ENCODE measurements at regions of chr4 and their contacts with region 1.

Region 1: GRCh38 chr4:186008057-186008456 is 60.9 kb upstream of the TLR3 start:
- DNase-seq: no peak
- ATAC-seq: no peak
- H3K4me3 ChIP-seq: no peak overlapping the region
- H3K4me3 Mint-ChIP-seq: no peak overlapping the region
- H3K27ac ChIP-seq: no peak overlapping the region
- H3K27ac Mint-ChIP-seq: no peak overlapping the region
- H3K4me1 ChIP-seq: peaks cover 4% of the 10 kb centered on the region
- H3K4me1 Mint-ChIP-seq: peaks cover 12 to 17% of the 10 kb centered on the region in 2 donors
- H3K27me3 ChIP-seq: no peaks in the 10 kb centered on the region
- H3K27me3 Mint-ChIP-seq: peaks cover 8 to 38% of the 10 kb centered on the region in 2 donors
- CTCF ChIP-seq: no peak

Region 2: DNA sequence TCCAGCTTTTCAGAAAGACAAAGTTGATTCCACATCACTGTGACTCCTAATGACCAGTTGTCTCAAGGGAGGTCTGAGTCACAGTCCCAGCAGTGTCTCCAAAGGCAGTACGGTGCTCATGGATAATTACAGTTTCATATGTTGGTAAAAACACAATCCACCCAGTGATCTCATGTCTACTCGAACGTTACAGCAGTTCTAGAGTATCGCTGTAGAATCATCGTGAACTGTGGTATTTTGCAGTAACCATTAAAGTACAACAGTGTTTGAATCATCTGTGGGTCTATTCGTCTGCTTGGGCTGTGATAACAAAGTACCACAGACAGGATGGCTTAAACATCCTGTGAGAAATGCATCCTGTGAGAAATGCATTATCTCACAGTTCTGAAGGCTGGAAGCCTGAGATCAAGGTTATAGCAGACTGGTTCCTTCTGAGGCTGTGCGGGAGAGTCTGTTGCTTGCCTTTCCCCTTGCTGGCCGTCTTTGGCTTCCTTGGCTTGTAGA is 74.9 kb before region 1 on chr4:
- intact Hi-C with region 1: loop called (anchors 5 kb)
- DNase-seq: peak in 1 of 2 donors; percentile 3
- ATAC-seq: peak; percentile 85 to 93 (median 89)
- H3K4me3 ChIP-seq: peak overlapping the region; percentile 10
- H3K4me3 Mint-ChIP-seq: peak overlapping the region; percentile 79
- H3K27ac ChIP-seq: peak overlapping the region; percentile 85
- H3K27ac Mint-ChIP-seq: peak overlapping the region; percentile 85 to 92
- H3K4me1 ChIP-seq: peaks cover 10% of the 10 kb centered on the region
- H3K4me1 Mint-ChIP-seq: peaks cover 21 to 26% of the 10 kb centered on the region in 2 donors
- H3K27me3 ChIP-seq: no peaks in the 10 kb centered on the region
- H3K27me3 Mint-ChIP-seq: peaks cover 0 to 4% of the 10 kb centered on the region in 2 donors
- CTCF ChIP-seq: no peak

Region 3: DNA sequence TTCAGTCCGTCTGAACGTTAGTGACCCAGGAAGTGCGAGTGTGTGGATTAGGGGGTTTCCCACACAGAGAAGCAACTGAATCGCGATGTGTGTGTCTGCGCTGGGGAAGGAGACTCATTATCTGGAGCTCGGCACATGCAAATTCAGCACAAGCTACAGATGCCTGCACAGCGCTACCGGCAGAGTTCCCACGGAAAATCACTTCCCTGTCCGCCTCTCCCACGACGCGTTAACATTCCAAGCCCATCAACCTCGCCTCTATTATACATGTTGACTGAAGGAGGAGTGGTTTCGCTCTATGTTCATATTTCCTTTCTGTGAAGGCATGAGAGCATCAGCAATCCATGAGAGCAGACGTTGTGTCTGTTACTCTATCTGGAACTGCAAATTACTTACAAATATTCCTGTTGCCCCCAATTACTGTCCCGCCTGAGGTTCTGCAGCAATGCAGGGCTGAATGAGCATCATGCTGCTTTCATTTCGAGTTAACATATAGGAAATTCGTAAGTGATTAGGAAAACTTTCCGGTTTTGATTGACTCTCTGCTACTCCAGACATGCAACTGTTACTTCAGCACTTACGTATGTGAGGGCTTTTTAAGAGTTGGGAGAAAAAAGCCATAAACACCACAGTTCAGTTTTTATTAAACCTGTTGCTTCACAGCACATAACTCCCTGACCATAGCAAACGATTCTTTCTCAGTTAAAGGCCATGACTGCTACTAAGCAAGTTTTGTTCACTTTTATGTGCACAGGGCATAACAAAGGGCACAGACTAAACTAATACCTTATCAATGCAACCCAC is 562.3 kb after region 1 on chr4:
- intact Hi-C with region 1: no loop called
- DNase-seq: no peak
- ATAC-seq: no peak
- H3K4me3 ChIP-seq: no peak overlapping the region
- H3K4me3 Mint-ChIP-seq: no peak overlapping the region
- H3K27ac ChIP-seq: no peak overlapping the region
- H3K27ac Mint-ChIP-seq: no peak overlapping the region
- H3K4me1 ChIP-seq: no peaks in the 10 kb centered on the region
- H3K4me1 Mint-ChIP-seq: no peaks in the 10 kb centered on the region
- H3K27me3 ChIP-seq: no peaks in the 10 kb centered on the region
- H3K27me3 Mint-ChIP-seq: peaks cover 0 to 2% of the 10 kb centered on the region in 2 donors
- CTCF ChIP-seq: no peak